AG04449 (cell line): ENCODE measurements at regions of chr5 and their contacts with region 1.

Region 1: DNA sequence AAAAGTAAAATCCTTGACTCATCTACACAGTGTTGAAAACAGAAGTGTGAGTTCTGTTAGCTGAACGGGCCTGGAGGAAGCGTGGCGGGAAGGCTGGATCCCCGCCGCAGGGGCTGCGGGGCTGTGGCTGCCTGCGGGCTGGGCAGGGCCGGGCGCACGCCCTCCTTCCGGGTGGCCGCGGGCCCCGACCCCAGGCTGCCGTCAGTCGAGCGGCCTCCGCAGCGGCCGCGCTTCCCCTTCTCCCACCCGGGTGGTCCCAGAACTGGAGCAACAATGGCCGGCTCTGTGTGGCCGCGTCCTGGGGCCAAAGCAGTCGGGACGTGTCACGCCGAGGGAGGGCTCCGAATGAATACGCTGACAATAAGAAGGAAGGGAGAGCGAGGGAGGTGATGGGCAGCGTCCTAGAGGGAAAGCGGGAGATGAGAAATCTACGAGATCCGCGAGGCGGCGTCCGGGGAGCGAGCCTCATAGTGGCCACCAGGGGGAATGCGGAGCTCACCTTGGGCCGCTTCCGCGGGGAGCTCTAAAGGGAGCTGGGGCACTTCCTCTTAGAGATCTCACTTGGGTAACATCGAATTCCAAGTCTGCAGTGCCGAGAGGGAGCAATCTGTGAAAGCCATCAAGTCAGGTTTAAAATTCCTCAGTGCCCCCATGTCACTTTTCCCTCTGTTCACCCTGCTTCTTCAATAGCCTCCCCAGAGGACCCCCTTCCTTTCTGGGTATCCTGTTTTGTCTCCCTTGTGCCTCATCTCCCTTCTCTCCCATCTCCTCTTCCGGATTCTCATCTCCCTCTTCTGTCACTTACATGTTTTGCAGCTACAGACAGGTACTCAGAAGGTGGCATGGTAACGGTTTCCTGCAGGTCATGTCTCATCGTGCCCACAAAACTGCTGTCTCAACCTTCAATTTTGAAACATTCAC is 83.9 kb downstream of the SLC1A3 start:
- DNase-seq: no peak
- H3K4me3 ChIP-seq: peak overlapping the region; percentile 61
- CTCF ChIP-seq: peak; percentile 94

Region 2: DNA sequence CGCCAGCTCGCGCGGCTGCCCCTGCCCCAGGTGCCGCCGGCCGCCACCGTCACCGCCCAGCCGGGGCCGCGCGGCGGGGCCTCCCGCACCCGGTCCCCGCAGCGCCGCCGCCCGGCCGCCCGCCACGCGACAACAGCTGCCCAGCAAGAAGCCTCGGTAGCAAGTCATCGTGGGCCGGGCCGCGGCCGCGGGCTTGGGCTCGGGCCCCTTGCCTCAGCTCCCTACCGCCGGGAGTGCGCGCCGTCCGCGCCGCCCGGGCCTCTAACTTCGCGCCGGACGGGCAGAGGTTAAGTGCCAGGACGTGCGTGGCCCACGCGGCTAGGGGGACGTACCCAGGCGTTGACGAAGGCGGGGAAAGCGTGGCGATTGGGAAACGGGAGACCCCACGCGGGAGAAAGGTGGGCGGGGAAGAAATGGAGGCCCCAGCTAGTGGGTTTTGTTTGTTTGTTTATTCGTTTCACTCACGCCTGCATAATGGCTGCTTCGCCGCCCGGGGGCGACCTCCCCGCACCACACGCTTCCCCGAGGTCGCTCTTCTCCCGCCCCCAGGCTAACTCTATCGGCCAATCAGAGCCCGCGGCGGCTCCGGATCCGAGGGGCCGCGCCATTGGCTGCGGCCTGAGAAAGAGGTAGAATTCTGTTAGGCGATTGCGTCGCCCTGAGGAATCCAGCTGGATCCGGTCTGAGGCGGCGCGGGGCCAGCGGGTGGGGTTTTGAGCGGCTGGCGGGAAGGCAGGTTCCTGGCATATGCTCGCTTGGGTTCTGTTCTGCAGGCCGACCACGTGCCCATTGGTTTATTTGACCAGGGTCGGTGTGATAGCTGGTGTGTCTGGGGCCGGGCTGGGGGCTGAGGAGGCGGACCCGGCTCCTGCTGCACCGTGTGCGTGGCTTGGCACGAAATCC is 448.4 kb before region 1 on chr5 and contains the start of gene NADK2:
- CTCF ChIA-PET with region 1: interaction called, 13 read pairs
- POLR2A ChIA-PET with region 1: no interaction called
- DNase-seq: peak; percentile 71
- H3K4me3 ChIP-seq: peak within 1 kb of the TSS; percentile 78
- CTCF ChIP-seq: peak; percentile 68

Region 3: GRCh38 chr5:36403632-36404311 is 286.5 kb before region 1 on chr5:
- CTCF ChIA-PET with region 1: interaction called, 127 read pairs
- POLR2A ChIA-PET with region 1: no interaction called
- DNase-seq: peak; percentile 80
- H3K4me3 ChIP-seq: no peak overlapping the region
- CTCF ChIP-seq: no peak

Region 4: DNA sequence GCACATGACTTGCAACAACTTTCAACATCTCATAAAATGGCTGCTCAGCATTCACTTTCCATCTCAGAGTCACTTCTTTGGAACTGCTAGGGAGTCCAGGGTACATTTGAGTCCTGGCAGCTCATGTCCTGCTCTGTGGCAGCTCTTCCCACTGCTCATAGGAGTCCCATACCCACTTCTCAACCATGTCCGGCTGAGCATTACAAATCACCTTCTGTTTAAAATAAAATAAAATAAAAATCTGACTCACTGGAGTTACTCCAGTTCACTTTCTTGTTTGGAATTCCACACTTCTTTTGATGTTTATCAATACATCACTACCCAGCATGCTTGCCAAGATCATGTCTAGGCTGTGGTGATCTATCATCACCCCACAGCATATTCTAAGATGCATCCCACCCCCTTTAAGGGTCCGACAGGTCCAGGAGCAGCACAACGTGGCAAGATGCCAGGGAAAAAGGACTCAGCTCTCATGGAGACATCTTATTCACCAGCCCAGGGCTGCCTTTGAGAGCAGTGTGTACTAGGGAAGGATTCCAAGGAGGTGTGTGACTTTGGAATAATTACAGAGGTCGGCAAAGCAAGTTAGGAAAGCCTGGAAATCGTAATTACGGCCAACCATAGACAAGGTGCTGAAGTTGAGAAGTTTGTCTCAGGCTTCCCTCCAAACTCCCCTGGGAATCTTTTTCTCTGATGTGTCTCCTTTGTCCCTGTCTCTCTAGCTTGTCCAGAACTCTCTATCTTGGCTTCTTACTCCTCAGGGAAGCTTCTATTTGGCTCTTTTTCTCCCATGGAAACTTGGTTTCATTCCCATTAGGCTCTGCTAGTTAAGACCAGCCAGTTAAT is 195.3 kb before region 1 on chr5:
- CTCF ChIA-PET with region 1: interaction called, 165 read pairs
- POLR2A ChIA-PET with region 1: no interaction called
- DNase-seq: no peak
- H3K4me3 ChIP-seq: no peak overlapping the region
- CTCF ChIP-seq: no peak

Region 5: DNA sequence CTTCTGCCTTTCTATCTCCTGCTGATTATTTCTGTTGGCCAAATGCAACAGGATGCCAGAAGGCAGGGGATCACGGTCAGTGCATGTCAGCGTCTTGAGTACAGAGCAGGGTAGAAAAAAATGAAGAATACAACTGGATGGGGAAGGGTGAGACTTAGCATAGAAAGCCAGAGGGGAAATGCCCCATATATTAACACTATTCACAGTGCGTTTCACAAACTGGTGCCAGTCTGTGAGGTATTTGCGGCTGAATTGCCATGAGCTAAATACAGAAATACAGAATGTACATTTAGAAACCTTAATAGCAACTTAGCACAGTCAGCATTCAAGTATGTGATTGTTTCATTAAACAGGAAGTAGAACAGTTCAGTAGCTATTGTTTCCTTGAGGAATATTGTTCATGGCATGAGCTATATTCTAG is 114.9 kb before region 1 on chr5:
- CTCF ChIA-PET with region 1: interaction called, 14 read pairs
- POLR2A ChIA-PET with region 1: no interaction called
- DNase-seq: no peak
- H3K4me3 ChIP-seq: no peak overlapping the region
- CTCF ChIP-seq: no peak

Region 6: GRCh38 chr5:36701085-36701698 is 10.9 kb after region 1 on chr5:
- CTCF ChIA-PET with region 1: interaction called, 47 read pairs
- POLR2A ChIA-PET with region 1: no interaction called
- DNase-seq: no peak
- H3K4me3 ChIP-seq: no peak overlapping the region
- CTCF ChIP-seq: no peak